ENCODE measurements at regions of chr19 and their contacts with region 1.

Region 1: GRCh38 chr19:55599468-55600279 is at the start of gene FIZ1:
- DNase-seq: peak; percentile 90 to 99
- ATAC-seq: peak; percentile 78 to 91
- H3K4me3 ChIP-seq: peak within 1 kb of the TSS; percentile 69
- H3K27ac ChIP-seq: peak within 1 kb of the TSS; percentile 95 to 96
- H3K4me1 ChIP-seq: peaks cover 20% of the 10 kb centered on the region
- CTCF ChIP-seq: no peak
- EP300 ChIP-seq: no peak
- POLR2A ChIP-seq: peak; percentile 33
- RAD21 ChIP-seq: no peak; a peak in 1 of 5 replicates
- polyA plus RNA-seq, gene FIZ1: 10.3 and 10.4 TPM in 2 replicates

Region 2: GRCh38 chr19:55407800-55408532 is 191.7 kb before region 1 on chr19:
- CTCF ChIA-PET with region 1: no interaction called
- POLR2A ChIA-PET with region 1: interaction called, 10 read pairs
- DNase-seq: peak; percentile 100
- ATAC-seq: peak; percentile 90 to 96
- H3K4me3 ChIP-seq: peak overlapping the region; percentile 98
- H3K27ac ChIP-seq: peak overlapping the region; percentile 95 to 97
- H3K4me1 ChIP-seq: peaks cover 36% of the 10 kb centered on the region
- CTCF ChIP-seq: no peak
- EP300 ChIP-seq: no peak
- POLR2A ChIP-seq: no peak
- RAD21 ChIP-seq: no peak

Region 3: DNA sequence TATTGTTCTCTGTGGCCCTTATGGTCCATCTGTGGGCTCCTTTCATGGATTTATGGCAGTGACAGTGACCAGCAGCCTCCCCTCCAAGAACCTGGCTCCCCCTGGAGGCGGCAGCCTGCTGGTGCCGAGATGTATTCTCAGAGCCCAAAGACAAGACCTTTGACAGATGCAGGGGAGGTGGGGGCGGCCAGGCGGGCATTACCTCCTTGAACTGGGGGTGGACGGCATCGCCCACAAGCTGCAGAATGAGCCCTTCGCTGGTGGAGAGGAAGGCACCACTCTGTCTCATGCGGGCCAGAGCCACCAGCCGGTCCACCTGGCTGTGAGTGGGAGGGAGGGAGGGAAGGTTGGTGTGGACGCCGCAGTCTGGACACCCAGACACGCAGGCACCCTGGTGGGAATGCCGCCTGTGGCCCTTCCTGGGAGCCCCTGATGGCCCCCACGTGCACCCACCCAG is 144.9 kb before region 1 on chr19:
- CTCF ChIA-PET with region 1: no interaction called
- POLR2A ChIA-PET with region 1: no interaction called
- DNase-seq: peak; percentile 78 to 92
- ATAC-seq: peak; percentile 70 to 82
- H3K4me3 ChIP-seq: no peak overlapping the region
- H3K27ac ChIP-seq: no peak overlapping the region
- H3K4me1 ChIP-seq: peaks cover 27% of the 10 kb centered on the region
- CTCF ChIP-seq: peak; percentile 78
- EP300 ChIP-seq: no peak
- POLR2A ChIP-seq: no peak
- RAD21 ChIP-seq: peak; percentile 60 to 77

Region 4: GRCh38 chr19:55516878-55517620 is 82.6 kb before region 1 on chr19:
- CTCF ChIA-PET with region 1: interaction called, 348 read pairs
- POLR2A ChIA-PET with region 1: interaction called, 13 read pairs
- DNase-seq: peak; percentile 97 to 100
- ATAC-seq: peak; percentile 90 to 95
- H3K4me3 ChIP-seq: peak overlapping the region; percentile 35
- H3K27ac ChIP-seq: peak overlapping the region; percentile 78 to 88
- H3K4me1 ChIP-seq: peaks cover 21% of the 10 kb centered on the region
- CTCF ChIP-seq: peak; percentile 97
- EP300 ChIP-seq: no peak
- POLR2A ChIP-seq: peak; percentile 27; the same call in 1 of the 2 replicates
- RAD21 ChIP-seq: peak; percentile 100

Region 5: DNA sequence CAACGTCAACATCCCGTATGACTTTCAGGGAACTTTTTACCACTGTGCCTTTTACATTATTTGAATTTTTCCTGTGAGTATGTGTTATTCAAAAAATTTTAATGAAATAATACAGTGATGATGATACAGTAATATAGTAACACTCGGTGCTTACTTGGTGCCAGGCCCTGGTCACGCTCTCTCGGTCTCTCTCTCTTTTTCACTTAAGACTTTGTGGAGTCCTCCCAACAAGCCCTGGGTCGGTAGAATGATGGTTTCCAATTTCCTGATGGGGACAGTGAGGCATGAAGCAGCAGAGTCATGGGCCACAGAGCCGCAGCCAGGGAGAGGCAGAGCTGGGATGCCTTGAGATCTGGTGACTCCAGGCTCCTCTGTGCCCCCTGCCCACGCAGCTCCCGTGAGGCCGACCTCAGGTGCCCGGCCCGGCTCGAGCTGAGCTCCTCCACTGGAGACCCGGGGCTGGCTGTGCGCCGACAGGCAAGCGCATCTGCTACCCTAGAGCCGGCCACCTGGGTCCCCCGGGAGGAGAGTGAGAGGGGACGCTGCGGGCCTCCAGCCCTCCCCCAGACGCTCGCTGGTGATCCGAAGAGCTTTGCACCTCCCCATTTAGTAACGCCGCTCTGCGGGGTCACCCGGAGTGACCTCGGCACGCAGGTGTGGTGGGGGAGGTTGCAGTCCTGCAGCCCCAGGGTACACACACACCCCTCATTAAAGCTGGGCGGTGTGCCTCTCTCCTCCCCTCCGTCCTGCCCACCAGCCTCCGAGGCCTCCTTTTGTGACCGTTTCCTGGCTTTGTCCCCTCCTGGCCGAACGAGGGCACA is 50.0 kb before region 1 on chr19:
- CTCF ChIA-PET with region 1: interaction called, 42 read pairs
- POLR2A ChIA-PET with region 1: interaction called, 44 read pairs
- DNase-seq: peak; percentile 88
- ATAC-seq: peak; percentile 74 to 75
- H3K4me3 ChIP-seq: peak overlapping the region; percentile 38
- H3K27ac ChIP-seq: peak overlapping the region; percentile 97 to 99
- H3K4me1 ChIP-seq: peaks cover 76% of the 10 kb centered on the region
- CTCF ChIP-seq: no peak; the same call in 2 of the 3 replicates
- EP300 ChIP-seq: no peak
- POLR2A ChIP-seq: peak; percentile 33; the same call in 1 of the 2 replicates
- RAD21 ChIP-seq: peak; percentile 41 to 42; a peak in 2 of 5 replicates

Region 6: DNA sequence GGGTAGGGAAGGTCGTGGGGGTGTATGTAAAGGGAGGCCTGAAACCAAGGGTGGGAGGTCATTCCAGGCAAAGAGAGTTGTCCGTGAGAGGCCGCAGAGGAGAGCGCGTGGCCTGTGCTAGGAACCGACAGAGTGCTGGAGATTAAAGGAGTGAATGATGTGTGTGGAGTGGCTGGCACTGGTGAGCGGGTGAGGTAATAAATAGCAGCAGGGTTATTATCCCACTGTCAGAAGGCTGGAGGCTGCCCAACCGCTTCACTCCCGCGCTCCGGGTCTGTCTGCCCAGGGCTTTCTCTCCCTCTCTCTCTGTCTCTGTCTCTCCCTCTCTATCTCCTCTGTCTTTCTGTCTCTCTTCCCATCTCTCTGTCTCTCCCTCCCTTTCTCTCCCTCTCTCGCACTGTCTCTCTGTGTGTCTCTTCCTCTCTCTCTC is 36.4 kb before region 1 on chr19:
- CTCF ChIA-PET with region 1: no interaction called
- POLR2A ChIA-PET with region 1: no interaction called
- DNase-seq: no peak
- ATAC-seq: peak; percentile 65 to 66; a peak in 5 of 6 replicates
- H3K4me3 ChIP-seq: no peak overlapping the region
- H3K27ac ChIP-seq: no peak overlapping the region
- H3K4me1 ChIP-seq: peaks cover 6% of the 10 kb centered on the region; the same call in 1 of the 3 replicates
- CTCF ChIP-seq: no peak
- EP300 ChIP-seq: no peak
- POLR2A ChIP-seq: no peak
- RAD21 ChIP-seq: no peak

Region 7: GRCh38 chr19:55586976-55587668 is 12.6 kb before region 1 on chr19:
- CTCF ChIA-PET with region 1: interaction called, 6 read pairs
- POLR2A ChIA-PET with region 1: interaction called, 23 read pairs
- DNase-seq: peak; percentile 97 to 98
- ATAC-seq: peak; percentile 86 to 88
- H3K4me3 ChIP-seq: peak overlapping the region; percentile 43
- H3K27ac ChIP-seq: peak overlapping the region; percentile 53 to 79
- H3K4me1 ChIP-seq: peaks cover 22% of the 10 kb centered on the region
- CTCF ChIP-seq: no peak
- EP300 ChIP-seq: no peak
- POLR2A ChIP-seq: no peak
- RAD21 ChIP-seq: no peak; a peak in 1 of 5 replicates